Activated CD4-positive, alpha-beta T cell treated with anti-CD3 and anti-CD28 coated beads, Interleukin-2, amount 10 ng/mL, durations not matched to agents 7 days and 5 days (primary cell): ENCODE measurements at regions of chr1 and their contacts with region 1.

Region 1: GRCh38 chr1:203273206-203273868 is 32.0 kb upstream of the BTG2 start:
- DNase-seq: peak; percentile 93
- H3K4me3 Mint-ChIP-seq: peak overlapping the region; percentile 60
- H3K27ac Mint-ChIP-seq: peak overlapping the region; percentile 86
- H3K4me1 Mint-ChIP-seq: peaks cover 77% of the 10 kb centered on the region
- H3K27me3 Mint-ChIP-seq: no peaks in the 10 kb centered on the region

Region 2: GRCh38 chr1:203216274-203217138 is 56.8 kb before region 1 on chr1:
- CTCF ChIA-PET with region 1: no interaction called
- POLR2A ChIA-PET with region 1: no interaction called
- DNase-seq: peak; percentile 64
- H3K4me3 Mint-ChIP-seq: no peak overlapping the region
- H3K27ac Mint-ChIP-seq: no peak overlapping the region
- H3K4me1 Mint-ChIP-seq: no peaks in the 10 kb centered on the region
- H3K27me3 Mint-ChIP-seq: peaks cover 3% of the 10 kb centered on the region

Region 3: DNA sequence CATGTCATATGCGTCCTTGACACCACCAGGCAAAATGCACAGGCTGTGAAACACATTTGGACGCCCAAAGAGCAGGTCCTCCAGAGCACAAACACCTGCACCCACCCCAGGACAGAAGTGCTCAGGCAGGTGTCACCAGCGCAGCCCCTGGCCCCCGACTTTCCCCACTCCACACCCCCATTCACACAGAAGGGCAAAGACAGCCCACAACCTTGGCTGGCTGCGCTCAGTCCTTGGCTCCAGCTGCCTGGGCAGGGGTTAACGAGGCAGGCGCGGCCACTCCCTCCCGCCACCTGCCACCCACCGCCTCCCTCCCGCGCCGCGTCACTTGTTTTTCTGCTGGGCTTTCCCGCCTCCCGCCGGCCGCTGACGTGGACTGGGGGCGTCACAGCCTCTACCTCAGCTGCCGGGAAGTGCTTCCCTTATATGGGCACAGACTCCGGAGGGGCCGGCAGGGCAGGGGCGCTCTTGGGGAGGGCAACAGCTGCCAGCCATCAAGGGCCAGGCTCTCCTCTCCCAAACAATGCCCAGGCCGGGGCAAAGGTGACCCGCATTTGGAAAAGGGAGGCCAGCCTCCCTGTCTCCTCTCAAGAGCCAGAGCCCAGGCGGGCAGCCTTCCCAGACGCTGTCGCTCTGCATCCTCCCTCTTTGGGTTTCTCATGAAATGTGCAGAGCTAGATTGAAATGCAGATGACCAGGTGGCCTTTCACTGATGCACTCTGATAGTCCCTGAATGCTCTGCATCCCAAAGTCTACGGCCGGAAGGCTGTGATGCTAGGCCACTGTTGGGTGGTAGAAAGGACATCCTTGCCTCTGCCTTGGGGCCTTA is 17.1 kb after region 1 on chr1:
- CTCF ChIA-PET with region 1: interaction called, 177 read pairs
- POLR2A ChIA-PET with region 1: interaction called, 4 read pairs
- DNase-seq: peak; percentile 97
- H3K4me3 Mint-ChIP-seq: peak overlapping the region; percentile 67
- H3K27ac Mint-ChIP-seq: peak overlapping the region; percentile 99
- H3K4me1 Mint-ChIP-seq: peaks cover 77% of the 10 kb centered on the region
- H3K27me3 Mint-ChIP-seq: no peaks in the 10 kb centered on the region

Region 4: GRCh38 chr1:203299169-203299568 is 25.8 kb after region 1 on chr1:
- CTCF ChIA-PET with region 1: interaction called, 10 read pairs
- POLR2A ChIA-PET with region 1: interaction called, 3 read pairs
- DNase-seq: no peak
- H3K4me3 Mint-ChIP-seq: no peak overlapping the region
- H3K27ac Mint-ChIP-seq: no peak overlapping the region
- H3K4me1 Mint-ChIP-seq: peaks cover 42% of the 10 kb centered on the region
- H3K27me3 Mint-ChIP-seq: no peaks in the 10 kb centered on the region

Region 5: DNA sequence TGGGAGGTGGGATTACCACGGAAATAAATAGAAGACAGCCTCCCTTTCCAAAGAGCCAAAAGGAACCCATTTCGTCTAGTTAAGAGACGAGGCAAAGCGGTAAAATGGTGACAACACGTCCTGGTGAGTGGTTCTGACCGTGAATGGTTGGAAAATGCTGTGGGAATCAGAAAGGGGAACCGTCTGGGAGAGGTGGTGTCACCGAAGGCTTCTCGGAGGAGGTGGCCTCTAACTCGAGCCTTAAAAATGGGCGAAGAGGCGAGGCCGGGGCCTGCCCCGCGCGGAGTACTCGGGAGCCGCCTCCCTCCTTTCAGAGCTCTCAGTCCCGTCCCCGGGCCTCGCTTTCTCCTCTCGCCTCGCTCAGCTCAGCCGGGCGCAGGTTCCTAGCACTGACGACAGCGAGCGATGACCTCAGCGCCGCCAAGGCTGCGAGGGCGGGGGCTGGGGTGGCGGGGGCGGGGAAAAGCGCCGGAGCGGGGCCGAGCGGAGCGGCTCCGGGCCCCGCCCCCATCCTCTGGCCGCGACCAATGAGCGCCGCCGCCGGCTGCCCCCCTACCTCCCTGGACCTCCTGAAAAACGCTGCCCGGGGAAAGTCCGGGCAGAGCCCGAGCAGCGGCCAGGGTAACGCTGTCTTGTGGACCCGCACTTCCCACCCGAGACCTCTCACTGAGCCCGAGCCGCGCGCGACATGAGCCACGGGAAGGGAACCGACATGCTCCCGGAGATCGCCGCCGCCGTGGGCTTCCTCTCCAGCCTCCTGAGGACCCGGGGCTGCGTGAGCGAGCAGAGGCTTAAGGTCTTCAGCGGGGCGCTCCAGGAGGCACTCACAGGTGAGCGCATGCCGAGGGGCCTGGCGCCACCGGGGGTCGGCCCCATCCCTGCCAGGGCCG is 31.8 kb after region 1 on chr1 and contains the start of gene BTG2:
- CTCF ChIA-PET with region 1: interaction called, 58 read pairs
- POLR2A ChIA-PET with region 1: interaction called, 3 read pairs
- DNase-seq: peak; percentile 91
- H3K4me3 Mint-ChIP-seq: peak within 1 kb of the TSS; percentile 96
- H3K27ac Mint-ChIP-seq: peak within 1 kb of the TSS; percentile 96
- H3K4me1 Mint-ChIP-seq: peaks cover 57% of the 10 kb centered on the region
- H3K27me3 Mint-ChIP-seq: no peaks in the 10 kb centered on the region
- total RNA-seq, gene BTG2: 73.6 to 82.3 TPM

Region 6: GRCh38 chr1:203320591-203321272 is 47.4 kb after region 1 on chr1:
- CTCF ChIA-PET with region 1: interaction called, 169 read pairs
- POLR2A ChIA-PET with region 1: no interaction called
- DNase-seq: peak; percentile 89
- H3K4me3 Mint-ChIP-seq: peak overlapping the region; percentile 39
- H3K27ac Mint-ChIP-seq: peak overlapping the region; percentile 95
- H3K4me1 Mint-ChIP-seq: peaks cover 78% of the 10 kb centered on the region
- H3K27me3 Mint-ChIP-seq: no peaks in the 10 kb centered on the region

Region 7: DNA sequence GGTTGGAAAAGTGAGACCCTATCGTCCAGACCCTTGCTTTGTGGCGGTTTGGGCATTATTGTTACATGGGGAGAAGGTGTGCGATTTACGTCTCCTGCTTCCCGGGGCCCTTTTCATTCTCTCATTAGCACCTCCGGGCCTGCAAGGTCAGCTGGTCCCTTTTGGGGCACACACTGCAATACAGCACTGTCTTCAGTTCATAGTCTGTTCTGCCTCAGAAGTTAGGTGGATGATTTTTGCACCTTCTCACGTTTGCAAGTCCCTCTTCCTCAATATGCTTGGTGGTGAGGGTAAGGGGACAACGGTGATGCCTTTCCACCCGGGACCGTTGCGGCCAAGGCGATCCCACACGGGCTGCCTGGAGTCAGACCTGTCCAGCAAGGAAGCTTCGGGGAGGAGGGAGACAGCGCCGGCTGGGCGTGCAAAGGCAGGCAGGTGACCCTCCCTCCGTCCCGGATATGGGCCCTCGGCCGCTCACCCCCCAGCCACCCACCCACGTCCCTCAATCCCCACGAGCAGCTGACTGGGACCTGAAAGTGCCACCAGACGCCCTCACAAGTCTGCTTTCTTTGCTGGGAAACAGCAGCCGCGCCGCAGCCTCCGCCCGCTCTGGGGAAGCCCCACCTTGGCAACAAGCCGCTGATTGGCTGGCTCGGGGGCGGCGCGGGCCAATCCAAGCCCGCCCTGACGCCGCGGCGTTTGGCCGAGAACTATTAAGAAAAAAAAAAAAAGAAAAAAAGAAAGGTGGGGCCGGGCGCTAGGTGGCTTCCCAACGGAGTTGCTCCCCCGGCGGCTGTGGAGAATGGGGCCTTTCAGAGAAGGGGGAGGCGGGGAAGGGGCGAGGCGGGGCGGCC is 53.7 kb after region 1 on chr1:
- CTCF ChIA-PET with region 1: interaction called, 299 read pairs
- POLR2A ChIA-PET with region 1: interaction called, 5 read pairs
- DNase-seq: peak; percentile 95
- H3K4me3 Mint-ChIP-seq: peak overlapping the region; percentile 73
- H3K27ac Mint-ChIP-seq: peak overlapping the region; percentile 98
- H3K4me1 Mint-ChIP-seq: peaks cover 64% of the 10 kb centered on the region
- H3K27me3 Mint-ChIP-seq: no peaks in the 10 kb centered on the region

Region 8: DNA sequence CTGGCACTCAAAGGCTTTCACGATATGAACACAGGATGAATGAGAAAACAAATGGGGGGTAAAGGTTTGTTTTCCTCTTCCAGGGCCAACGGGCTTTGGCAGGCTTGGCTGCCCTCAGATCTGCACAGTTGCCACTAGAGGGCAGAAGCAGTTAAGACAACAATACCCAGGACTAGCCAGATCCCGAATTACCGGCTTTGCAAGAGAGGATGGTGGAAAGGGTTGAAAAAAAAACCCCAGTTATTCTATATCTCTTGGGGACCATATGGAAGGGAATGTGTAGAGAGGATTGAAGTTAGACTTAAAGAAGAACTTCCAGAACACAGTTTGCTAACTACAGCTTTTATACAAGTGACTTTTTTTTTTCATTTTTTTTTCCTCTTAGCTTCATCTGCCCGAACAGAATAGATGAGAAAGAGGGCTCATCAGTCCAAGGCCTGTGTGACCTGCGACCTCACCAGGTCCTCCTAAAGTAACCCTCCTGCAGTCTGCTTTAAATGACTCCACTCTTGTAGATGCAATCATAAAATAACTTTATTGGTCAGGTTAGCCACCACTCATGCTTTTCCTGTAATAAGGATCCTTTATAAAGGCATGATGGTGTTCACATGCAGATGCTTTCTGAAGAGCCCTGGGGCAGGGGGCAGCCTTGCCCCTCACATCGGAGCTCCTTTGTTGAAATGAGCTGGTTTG is 66.9 kb after region 1 on chr1:
- CTCF ChIA-PET with region 1: interaction called, 299 read pairs
- POLR2A ChIA-PET with region 1: interaction called, 3 read pairs
- DNase-seq: peak; percentile 74
- H3K4me3 Mint-ChIP-seq: no peak overlapping the region
- H3K27ac Mint-ChIP-seq: no peak overlapping the region
- H3K4me1 Mint-ChIP-seq: peaks cover 32% of the 10 kb centered on the region
- H3K27me3 Mint-ChIP-seq: peaks cover 27% of the 10 kb centered on the region